HCT116 (cell line): ENCODE measurements at regions of chr2 and their contacts with region 1.

Region 1: DNA sequence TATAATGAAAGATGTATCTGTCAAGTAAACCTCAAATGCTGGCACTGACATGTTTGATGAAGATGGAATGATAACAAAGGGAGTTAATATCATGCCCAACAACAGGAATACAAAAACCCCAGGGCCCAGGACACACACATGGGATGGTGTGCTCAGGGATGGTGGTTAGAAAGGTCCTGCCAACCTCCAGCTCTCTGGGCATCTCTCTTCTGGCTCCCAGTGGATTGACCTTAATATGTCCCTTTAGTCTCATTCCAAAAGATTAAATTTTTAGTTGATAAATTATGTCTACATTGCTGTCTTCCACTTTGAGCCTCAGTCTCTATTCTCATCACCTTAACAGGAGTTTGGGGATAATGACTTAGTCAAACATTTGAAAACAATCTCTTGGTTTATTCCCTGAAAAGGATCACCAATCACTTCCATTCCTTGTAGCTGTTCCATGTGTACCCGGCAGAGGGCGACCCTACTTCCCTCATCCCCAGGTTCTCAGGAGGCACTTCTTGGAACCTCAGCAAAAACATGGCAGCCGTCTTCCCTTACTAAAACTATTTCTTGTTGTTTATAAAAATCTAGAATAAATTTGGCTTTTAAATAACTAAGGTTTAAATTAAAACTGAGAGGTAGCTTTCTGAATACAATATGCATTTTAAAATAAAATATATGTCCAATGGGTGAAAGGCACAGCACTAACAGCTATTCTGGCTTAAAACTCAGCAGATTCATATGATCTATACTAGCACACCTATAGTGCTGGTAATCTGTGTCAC is 29.6 kb downstream of the MCEE start:
- DNase-seq: peak; percentile 51
- ATAC-seq: peak; percentile 99
- H3K4me3 ChIP-seq: no peak overlapping the region
- H3K27ac ChIP-seq: no peak overlapping the region
- H3K4me1 ChIP-seq: peaks cover 0 to 2% of the 10 kb centered on the region in 2 experiments; a peak in 1 of 4 replicates
- H3K27me3 ChIP-seq: no peaks in the 10 kb centered on the region
- CTCF ChIP-seq: peak; percentile 59 to 81 (median 68); a peak in 5 of 6 replicates
- POLR2A ChIP-seq: no peak
- RAD21 ChIP-seq: peak; percentile 66

Region 2: DNA sequence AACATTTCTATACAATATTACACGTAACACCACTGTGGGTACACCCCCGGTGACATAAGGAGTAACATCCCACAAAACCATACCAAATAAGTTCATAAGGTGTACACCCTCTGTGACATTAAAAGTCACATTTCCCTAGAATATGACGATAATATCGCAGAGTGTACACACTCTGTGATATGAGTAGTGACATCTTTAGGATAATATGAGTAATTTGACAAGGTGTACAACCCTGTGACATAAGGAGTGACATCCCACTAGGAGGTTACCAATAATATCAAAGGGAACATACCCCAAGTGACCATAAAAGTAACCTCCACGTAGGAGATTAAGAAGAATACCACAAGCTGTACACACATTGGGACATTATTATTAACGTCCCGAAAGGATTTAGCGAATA is 81.8 kb before region 1 on chr2:
- CTCF ChIA-PET with region 1: no interaction called
- POLR2A ChIA-PET with region 1: no interaction called
- RAD21 ChIA-PET with region 1: no interaction called
- intact Hi-C with region 1: no loop called
- DNase-seq: no peak
- ATAC-seq: no peak
- H3K4me3 ChIP-seq: no peak overlapping the region
- H3K27ac ChIP-seq: no peak overlapping the region
- H3K4me1 ChIP-seq: peaks cover 0 to 5% of the 10 kb centered on the region in 2 experiments; a peak in 1 of 4 replicates
- H3K27me3 ChIP-seq: no peaks in the 10 kb centered on the region
- CTCF ChIP-seq: no peak
- POLR2A ChIP-seq: no peak
- RAD21 ChIP-seq: no peak

Region 3: GRCh38 chr2:71071667-71072398 is 28.5 kb before region 1 on chr2:
- CTCF ChIA-PET with region 1: interaction called, 16 read pairs
- POLR2A ChIA-PET with region 1: interaction called, 4 read pairs
- RAD21 ChIA-PET with region 1: no interaction called
- intact Hi-C with region 1: no loop called
- DNase-seq: no peak
- ATAC-seq: no peak
- H3K4me3 ChIP-seq: no peak overlapping the region
- H3K27ac ChIP-seq: no peak overlapping the region
- H3K4me1 ChIP-seq: peaks cover 10 to 22% of the 10 kb centered on the region in 2 experiments
- H3K27me3 ChIP-seq: no peaks in the 10 kb centered on the region
- CTCF ChIP-seq: no peak
- POLR2A ChIP-seq: no peak
- RAD21 ChIP-seq: no peak